RWPE1 (cell line): ENCODE measurements at regions of chr2 and their contacts with region 1.

Region 1: DNA sequence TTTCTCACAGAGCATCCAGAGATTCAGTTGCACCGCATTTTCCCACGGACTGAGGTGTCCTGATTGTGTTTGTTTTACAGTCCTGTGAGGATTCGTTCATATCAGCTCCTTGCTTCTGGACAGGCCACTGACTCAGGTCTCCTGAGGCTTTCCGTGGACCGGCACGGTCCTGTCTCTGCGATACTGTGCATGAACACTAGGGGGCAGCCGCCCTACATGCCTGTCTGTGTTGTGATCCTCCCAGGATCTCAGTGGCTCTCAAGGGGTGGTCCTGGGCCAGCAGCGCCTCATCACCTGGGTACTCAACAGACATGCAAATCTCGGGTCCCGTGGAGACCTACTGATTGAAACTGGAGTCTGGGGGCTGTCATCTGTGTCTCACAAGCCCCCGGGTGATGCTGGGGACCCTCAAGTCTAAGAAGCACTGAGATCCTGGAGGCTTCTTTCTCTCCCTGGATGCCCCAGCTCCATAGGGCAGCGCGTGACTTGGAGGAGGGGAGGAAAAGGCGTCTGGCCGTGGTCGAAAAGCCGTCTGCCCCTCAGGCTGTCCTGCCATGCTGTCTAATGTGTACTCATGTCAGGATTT is 28.9 kb downstream of the IL1R2 start:
- DNase-seq: peak; percentile 74
- H3K27ac ChIP-seq: no peak overlapping the region
- CTCF ChIP-seq: peak; percentile 97

Region 2: DNA sequence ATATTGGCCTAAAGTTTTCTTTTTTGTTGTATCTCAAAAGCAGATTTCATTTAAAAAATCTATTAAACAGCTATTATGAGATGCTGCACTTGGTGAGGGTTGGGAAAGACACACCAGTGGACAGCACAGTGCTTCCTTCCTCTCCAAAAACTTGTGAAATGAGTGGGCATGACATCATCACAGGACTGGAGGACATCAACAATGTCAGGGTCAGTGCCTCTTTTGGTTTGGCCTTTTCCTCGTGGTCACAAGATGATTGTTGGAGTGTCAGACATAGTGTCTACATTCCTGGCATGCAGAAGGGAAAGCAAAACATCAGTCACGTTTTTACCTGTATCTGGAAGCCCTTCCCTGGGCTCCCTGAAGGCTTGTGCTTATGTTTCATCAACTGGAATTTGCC is 20.7 kb after region 1 on chr2:
- CTCF ChIA-PET with region 1: no interaction called
- POLR2A ChIA-PET with region 1: no interaction called
- DNase-seq: no peak
- H3K27ac ChIP-seq: no peak overlapping the region
- CTCF ChIP-seq: no peak

Region 3: DNA sequence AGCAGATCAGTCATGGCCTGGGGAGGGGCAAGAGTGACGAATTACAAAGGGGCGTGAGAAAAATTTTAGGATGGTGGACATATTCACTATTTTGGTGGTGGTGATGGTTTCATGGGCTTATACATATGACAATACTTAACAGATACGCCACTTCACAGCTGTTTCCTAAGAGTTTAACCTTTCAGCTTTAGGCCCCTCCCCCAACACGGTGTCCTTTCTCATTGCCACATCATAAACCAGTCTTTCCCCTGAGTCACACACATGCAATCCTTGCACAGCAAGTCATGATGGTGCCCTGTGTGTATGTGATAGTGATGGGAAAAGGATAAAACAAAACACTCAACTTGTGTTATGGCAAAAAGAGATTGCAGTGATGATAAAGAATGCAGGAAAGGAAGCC is 74.2 kb after region 1 on chr2:
- CTCF ChIA-PET with region 1: no interaction called
- POLR2A ChIA-PET with region 1: no interaction called
- DNase-seq: peak; percentile 59
- H3K27ac ChIP-seq: no peak overlapping the region
- CTCF ChIP-seq: no peak

Region 4: DNA sequence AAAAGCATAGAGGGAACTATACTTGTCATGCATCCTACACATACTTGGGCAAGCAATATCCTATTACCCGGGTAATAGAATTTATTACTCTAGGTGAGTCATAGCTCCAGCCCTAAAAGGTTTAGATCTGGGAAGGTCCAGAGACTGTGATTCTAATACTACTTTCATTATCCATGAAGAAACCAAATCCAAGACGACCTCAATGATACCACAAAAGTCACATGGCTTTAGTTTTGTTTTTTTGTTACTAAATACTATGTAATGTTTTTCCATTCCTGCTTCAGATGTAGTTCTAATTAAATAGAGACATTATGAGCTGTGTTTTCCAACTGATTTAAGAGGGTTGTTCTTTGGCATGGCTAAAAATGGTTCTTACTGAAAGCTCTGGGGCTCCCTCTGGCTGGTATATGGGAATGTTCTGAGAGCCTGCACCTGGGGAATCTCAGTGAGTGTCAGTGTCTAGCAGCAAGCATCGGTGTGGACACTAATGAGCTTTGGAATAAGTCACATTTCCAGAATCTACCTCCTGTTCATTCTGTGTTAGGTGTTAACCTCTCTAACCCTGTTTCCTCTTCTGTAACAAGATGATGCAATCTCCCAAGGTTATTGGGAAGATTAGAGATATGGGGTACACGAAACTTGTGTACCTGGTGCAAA is 145.6 kb after region 1 on chr2:
- CTCF ChIA-PET with region 1: interaction called, 34 read pairs
- POLR2A ChIA-PET with region 1: no interaction called
- DNase-seq: peak; percentile 36
- H3K27ac ChIP-seq: no peak overlapping the region
- CTCF ChIP-seq: peak; percentile 31

Region 5: GRCh38 chr2:102355526-102356380 is 335.1 kb after region 1 on chr2 and contains the start of gene IL18R1:
- CTCF ChIA-PET with region 1: interaction called, 10 read pairs
- POLR2A ChIA-PET with region 1: no interaction called
- DNase-seq: peak; percentile 74
- H3K27ac ChIP-seq: no peak within 1 kb of the TSS
- CTCF ChIP-seq: peak; percentile 89